ENCODE measurements at regions of chr1 and their contacts with region 1.

Region 1: GRCh38 chr1:203744075-203744972 is 20.7 kb upstream of the LAX1 start:
- DNase-seq: peak; percentile 89
- H3K4me3 ChIP-seq: no peak overlapping the region
- H3K27ac ChIP-seq: peak overlapping the region; percentile 29 to 44 (median 40)
- H3K4me1 ChIP-seq: peaks cover 0 to 22% (median 12%) of the 10 kb centered on the region in 4 donors
- H3K27me3 ChIP-seq: no peaks in the 10 kb centered on the region
- CTCF ChIP-seq: no peak
- EP300 ChIP-seq: no peak
- POLR2A ChIP-seq: no peak

Region 2: GRCh38 chr1:203663294-203663693 is 81.0 kb before region 1 on chr1:
- intact Hi-C with region 1: no loop called
- DNase-seq: no peak
- H3K4me3 ChIP-seq: no peak overlapping the region
- H3K27ac ChIP-seq: peak overlapping the region; percentile 83 to 98 (median 88)
- H3K4me1 ChIP-seq: peaks cover 0 to 100% (median 94%) of the 10 kb centered on the region in 4 donors
- H3K27me3 ChIP-seq: no peaks in the 10 kb centered on the region
- CTCF ChIP-seq: no peak
- EP300 ChIP-seq: peak in 1 of 4 donors; percentile 45
- POLR2A ChIP-seq: no peak

Region 3: GRCh38 chr1:203813581-203814341 is 69.4 kb after region 1 on chr1:
- intact Hi-C with region 1: loop called (anchors 5 kb)
- DNase-seq: no peak
- H3K4me3 ChIP-seq: no peak overlapping the region
- H3K27ac ChIP-seq: no peak overlapping the region
- H3K4me1 ChIP-seq: peaks cover 0 to 8% (median 1%) of the 10 kb centered on the region in 4 donors
- H3K27me3 ChIP-seq: no peaks in the 10 kb centered on the region
- CTCF ChIP-seq: no peak
- EP300 ChIP-seq: no peak
- POLR2A ChIP-seq: no peak